ENCODE measurements at regions of chr6 and their contacts with region 1.

Region 1: GRCh38 chr6:27545271-27546046 is 72.6 kb upstream of the ZNF184 start:
- DNase-seq: peak in 1 of 35 experiments; percentile 15
- ATAC-seq: no peak
- H3K4me3 ChIP-seq: no peak overlapping the region
- H3K4me3 Mint-ChIP-seq: peak overlapping the region in 1 of 3 donors; percentile 54
- H3K27ac ChIP-seq: no peak overlapping the region
- H3K27ac Mint-ChIP-seq: peak overlapping the region in 1 of 2 donors; percentile 36
- H3K4me1 ChIP-seq: peaks cover 0 to 11% of the 10 kb centered on the region in 2 experiments
- H3K4me1 Mint-ChIP-seq: peaks cover 13 to 14% (median 14%) of the 10 kb centered on the region in 3 donors
- H3K27me3 ChIP-seq: peaks cover 34 to 59% of the 10 kb centered on the region in 2 experiments
- H3K27me3 Mint-ChIP-seq: peaks cover 91% of the 10 kb centered on the region in 2 donors

Region 2: DNA sequence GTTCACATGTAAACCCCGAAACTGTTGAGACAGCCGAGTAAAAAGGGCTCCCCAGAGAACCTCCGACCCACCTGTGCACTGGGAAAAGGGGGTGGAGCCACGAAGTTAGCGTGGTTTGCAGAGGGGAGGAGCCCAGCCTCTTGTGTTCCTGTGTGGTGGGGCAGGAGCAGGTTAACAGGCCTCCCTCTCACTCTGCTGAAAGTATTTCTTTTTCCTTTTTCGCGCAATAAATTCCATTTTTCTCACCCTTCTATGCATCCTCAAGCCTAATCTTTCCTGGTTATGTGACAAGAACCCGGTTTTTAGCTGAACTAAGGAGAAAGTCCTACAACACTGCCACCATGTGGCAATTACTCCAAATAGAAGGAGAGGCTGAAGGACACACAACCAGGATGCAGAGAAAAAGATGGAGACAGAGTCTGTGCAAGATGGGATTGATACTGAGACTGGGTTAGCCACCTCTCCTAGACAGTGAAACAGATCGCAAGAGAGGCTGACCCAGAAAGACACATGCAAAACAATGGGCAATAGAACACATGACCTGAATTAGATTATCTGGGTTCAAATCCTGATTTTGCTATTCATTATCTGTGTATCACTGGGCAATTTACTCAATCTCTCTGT is 466.6 kb before region 1 on chr6:
- CTCF ChIA-PET with region 1: no interaction called
- POLR2A ChIA-PET with region 1: interaction called in 1 of 2 experiments, 11 read pairs
- DNase-seq: peak in 21 of 35 experiments; percentile 3 to 67 (median 17)
- ATAC-seq: peak; percentile 58 to 87 (median 76)
- H3K4me3 ChIP-seq: peak overlapping the region; percentile 35 to 59
- H3K4me3 Mint-ChIP-seq: peak overlapping the region; percentile 30 to 75 (median 69)
- H3K27ac ChIP-seq: no peak overlapping the region
- H3K27ac Mint-ChIP-seq: no peak overlapping the region
- H3K4me1 ChIP-seq: peaks cover 6 to 7% of the 10 kb centered on the region in 2 experiments
- H3K4me1 Mint-ChIP-seq: peaks cover 3 to 8% (median 6%) of the 10 kb centered on the region in 3 donors
- H3K27me3 ChIP-seq: peaks cover 7% of the 10 kb centered on the region in 2 experiments
- H3K27me3 Mint-ChIP-seq: peaks cover 49 to 54% of the 10 kb centered on the region in 2 donors

Region 3: GRCh38 chr6:27406092-27406491 is 139.4 kb before region 1 on chr6:
- CTCF ChIA-PET with region 1: no interaction called
- POLR2A ChIA-PET with region 1: no interaction called
- DNase-seq: no peak
- ATAC-seq: no peak
- H3K4me3 ChIP-seq: no peak overlapping the region
- H3K4me3 Mint-ChIP-seq: no peak overlapping the region
- H3K27ac ChIP-seq: no peak overlapping the region
- H3K27ac Mint-ChIP-seq: no peak overlapping the region
- H3K4me1 ChIP-seq: no peaks in the 10 kb centered on the region
- H3K4me1 Mint-ChIP-seq: no peaks in the 10 kb centered on the region
- H3K27me3 ChIP-seq: peaks cover 0 to 8% of the 10 kb centered on the region in 2 experiments
- H3K27me3 Mint-ChIP-seq: no peaks in the 10 kb centered on the region